ENCODE measurements at regions of chr20 and their contacts with region 1.

Region 1: DNA sequence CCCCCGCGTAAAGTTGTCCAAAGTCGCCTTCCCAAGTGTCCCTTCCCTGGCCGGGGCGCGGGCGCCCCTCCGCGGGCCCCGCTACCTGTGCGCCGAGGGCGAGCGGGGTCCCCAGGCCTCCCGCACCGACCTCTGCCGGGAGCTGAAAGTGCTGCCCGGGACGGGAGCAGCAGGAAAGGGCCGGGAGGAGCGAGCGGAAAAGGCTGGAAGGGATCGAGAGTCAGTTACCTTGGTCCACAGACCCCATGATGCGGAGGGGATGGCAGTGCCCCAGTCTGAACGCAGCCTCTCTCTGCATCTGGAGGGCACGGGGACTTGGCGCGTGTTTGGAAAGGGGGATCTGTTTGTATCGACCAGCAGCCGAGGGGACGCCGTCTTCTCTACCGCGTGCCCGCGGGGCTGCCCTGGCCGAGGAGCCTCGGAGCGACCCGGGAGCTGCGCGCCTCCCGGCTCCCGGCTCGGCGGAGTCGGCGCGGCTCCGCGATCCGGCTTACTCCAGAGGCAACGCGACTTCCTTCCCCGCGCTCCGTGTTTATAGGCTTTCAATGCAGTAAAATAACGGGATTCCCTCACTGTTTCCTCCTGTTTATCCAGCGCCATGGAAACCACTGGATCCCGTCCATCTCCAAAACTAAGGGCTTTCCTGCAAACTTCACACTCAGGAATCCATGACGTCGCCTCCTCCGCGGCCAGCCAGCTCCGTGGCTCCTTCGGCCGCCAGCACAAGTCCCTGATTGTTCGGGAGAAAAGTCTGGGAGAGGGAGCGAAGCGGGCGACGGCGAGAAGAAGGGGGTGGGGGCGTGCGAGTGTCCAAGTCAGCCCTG is 20.0 kb upstream of the NFATC2 start:
- DNase-seq: peak; percentile 89 to 94
- ATAC-seq: peak; percentile 89
- H3K4me3 ChIP-seq: peak overlapping the region; percentile 3 to 31
- H3K27ac ChIP-seq: peak overlapping the region; percentile 76 to 82
- H3K4me1 ChIP-seq: peaks cover 0 to 2% of the 10 kb centered on the region in 2 donors
- H3K27me3 ChIP-seq: no peaks in the 10 kb centered on the region

Region 2: DNA sequence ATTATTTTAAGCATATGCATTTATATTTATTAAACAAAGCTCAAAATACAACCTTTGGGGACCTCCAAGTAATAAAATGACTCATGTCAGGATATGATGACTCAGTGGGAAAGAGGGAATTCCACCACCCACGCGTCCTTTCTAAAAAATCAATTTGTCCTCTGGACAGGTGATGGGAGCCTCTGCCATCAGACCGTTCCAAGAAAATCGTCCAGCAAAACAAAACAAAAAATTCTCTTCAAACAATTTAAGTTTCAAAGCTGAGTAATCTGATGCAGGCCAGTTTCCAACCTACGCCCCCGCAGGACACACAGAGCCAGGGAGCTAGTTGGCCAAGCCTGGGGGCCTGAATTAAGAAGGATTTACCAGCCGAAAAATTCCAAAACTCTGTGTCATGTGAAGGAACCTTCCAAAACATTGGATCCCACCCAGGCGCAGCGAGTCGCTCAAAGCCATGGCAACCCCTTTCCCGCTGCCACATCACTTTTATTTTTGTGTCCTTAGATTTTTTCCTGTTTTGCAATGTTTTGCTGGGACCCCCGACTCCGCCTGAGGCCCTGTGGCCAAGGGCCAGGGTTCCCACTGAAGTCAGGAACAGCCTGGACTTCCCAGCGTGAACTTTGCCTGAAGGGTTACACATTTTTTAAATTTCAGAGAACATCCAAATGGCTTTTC is 115.3 kb before region 1 on chr20:
- intact Hi-C with region 1: loop called (anchors 5 to 10 kb)
- DNase-seq: peak; percentile 87 to 93
- ATAC-seq: peak; percentile 77
- H3K4me3 ChIP-seq: no peak overlapping the region
- H3K27ac ChIP-seq: no peak overlapping the region
- H3K4me1 ChIP-seq: no peaks in the 10 kb centered on the region
- H3K27me3 ChIP-seq: no peaks in the 10 kb centered on the region

Region 3: GRCh38 chr20:51456511-51457509 is 105.7 kb before region 1 on chr20:
- intact Hi-C with region 1: loop called in 1 of 2 experiments (anchors 10 kb)
- DNase-seq: peak; percentile 97 to 98
- ATAC-seq: peak; percentile 98
- H3K4me3 ChIP-seq: no peak overlapping the region
- H3K27ac ChIP-seq: peak overlapping the region in 1 of 2 donors; percentile 86
- H3K4me1 ChIP-seq: no peaks in the 10 kb centered on the region
- H3K27me3 ChIP-seq: no peaks in the 10 kb centered on the region

Region 4: DNA sequence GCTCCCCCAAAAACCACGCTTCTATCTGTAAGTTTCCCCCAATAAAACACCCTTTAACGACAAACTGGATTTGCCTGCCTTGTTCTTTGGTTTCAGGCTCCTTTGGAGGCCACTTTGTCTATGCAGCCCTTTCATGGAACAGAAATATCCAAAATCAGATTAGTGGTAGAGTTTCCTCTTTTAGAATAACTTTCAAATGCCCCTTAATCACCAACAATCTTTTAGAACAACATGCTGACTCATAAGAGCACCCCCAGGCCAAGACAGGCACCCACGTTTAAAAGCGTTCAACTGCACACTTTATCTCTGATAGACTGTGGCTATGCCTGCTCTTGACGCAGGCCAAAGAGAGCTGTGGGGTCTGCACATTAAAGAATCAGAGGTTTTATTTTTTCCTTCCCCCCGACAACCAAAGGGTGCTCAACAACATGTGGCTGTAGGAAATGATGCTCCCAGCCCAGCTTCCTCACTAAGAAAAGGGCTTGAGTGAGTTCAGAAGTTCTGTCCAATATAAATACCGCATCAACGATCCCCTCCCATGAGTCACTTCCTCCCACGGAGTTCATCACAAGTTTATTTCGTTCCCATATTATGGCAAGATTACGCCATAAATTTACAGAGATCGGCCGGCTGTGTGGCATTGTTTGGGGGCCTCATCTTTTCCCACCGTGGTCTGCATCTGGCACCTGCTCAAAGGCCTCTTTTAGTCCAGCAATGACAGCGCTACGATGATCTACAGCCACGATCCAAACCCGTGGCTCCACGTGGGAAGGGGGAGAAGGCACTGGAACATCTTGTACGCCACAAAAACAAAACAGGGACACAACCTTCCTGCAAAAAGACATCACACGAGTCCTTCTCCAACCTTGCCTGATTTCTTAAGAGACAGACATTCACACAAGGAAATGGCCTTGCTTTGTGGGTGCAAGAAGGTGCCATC is 68.7 kb after region 1 on chr20:
- intact Hi-C with region 1: no loop called
- DNase-seq: peak in 1 of 2 donors; percentile 59
- ATAC-seq: peak; percentile 88
- H3K4me3 ChIP-seq: no peak overlapping the region
- H3K27ac ChIP-seq: peak overlapping the region; percentile 68 to 69
- H3K4me1 ChIP-seq: peaks cover 3% of the 10 kb centered on the region in 2 donors
- H3K27me3 ChIP-seq: no peaks in the 10 kb centered on the region